Transverse colon (tissue), 4 donors: ENCODE measurements at regions of chr1 and their contacts with region 1.

Region 1: GRCh38 chr1:39672551-39672947 is 642 bp upstream of the NT5C1A start:
- DNase-seq: no peak
- H3K4me3 ChIP-seq: peak overlapping the region in 2 of 4 donors; percentile 35 to 54
- H3K27ac ChIP-seq: no peak overlapping the region
- H3K4me1 ChIP-seq: peaks cover 0 to 16% (median 14%) of the 10 kb centered on the region in 4 donors
- H3K27me3 ChIP-seq: peaks cover 52% of the 10 kb centered on the region
- CTCF ChIP-seq: peak in 2 of 5 experiments; percentile 31 to 42
- EP300 ChIP-seq: no peak
- POLR2A ChIP-seq: no peak

Region 2: DNA sequence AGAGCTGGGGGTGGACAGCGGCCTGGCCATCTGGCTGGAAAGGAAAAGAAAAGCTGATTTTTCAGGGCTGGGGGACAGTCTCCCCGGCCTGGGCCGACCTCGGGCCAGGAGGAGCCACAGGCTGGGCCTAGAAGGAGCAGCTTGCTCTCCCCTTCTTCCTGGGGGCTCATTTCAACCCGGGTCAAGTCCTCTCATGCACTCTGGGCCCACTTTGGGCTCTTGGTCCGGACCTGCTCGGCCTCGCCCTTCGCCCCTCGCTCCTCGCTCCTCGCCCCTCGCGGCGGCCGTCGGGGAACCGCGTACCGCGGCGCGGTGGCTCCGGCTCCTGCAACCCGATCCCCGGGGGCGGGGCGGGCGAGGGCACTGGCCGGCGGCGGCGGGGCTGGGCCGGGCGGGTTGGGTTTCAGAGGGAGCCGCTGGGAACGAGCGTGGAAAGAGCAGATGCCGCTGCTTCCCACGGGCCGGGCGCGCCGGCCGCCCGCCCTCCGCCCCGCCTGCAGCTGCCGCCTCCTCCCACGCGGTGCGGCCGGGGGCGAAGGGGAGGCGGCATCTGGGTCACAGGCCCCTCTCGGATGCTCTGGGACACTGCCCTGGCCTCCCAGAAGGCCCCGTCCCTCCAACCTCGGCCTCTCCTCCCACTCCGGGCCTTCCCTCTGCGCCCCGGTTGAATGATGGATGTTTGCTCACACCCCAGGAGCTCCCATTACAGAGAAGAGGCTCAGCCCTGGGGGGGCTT is 39.7 kb before region 1 on chr1:
- in situ Hi-C with region 1: no loop called
- intact Hi-C with region 1: no loop called
- DNase-seq: peak; percentile 29
- H3K4me3 ChIP-seq: peak overlapping the region in 2 of 4 donors; percentile 9 to 12
- H3K27ac ChIP-seq: peak overlapping the region in 2 of 4 donors; percentile 25 to 28
- H3K4me1 ChIP-seq: peaks cover 0 to 5% (median 2%) of the 10 kb centered on the region in 4 donors
- H3K27me3 ChIP-seq: peaks cover 46% of the 10 kb centered on the region
- CTCF ChIP-seq: no peak
- EP300 ChIP-seq: no peak
- POLR2A ChIP-seq: no peak

Region 3: GRCh38 chr1:39711104-39711965 is 38.8 kb after region 1 on chr1:
- in situ Hi-C with region 1: loop called in 1 of 4 experiments (anchors 5 kb)
- intact Hi-C with region 1: no loop called
- DNase-seq: no peak
- H3K4me3 ChIP-seq: no peak overlapping the region
- H3K27ac ChIP-seq: no peak overlapping the region
- H3K4me1 ChIP-seq: no peaks in the 10 kb centered on the region
- H3K27me3 ChIP-seq: peaks cover 34% of the 10 kb centered on the region
- CTCF ChIP-seq: no peak
- EP300 ChIP-seq: no peak
- POLR2A ChIP-seq: no peak

Region 4: GRCh38 chr1:40107290-40108262 is 435.0 kb after region 1 on chr1:
- in situ Hi-C with region 1: no loop called
- intact Hi-C with region 1: no loop called
- DNase-seq: no peak
- H3K4me3 ChIP-seq: no peak overlapping the region
- H3K27ac ChIP-seq: no peak overlapping the region
- H3K4me1 ChIP-seq: no peaks in the 10 kb centered on the region
- H3K27me3 ChIP-seq: peaks cover 9% of the 10 kb centered on the region
- CTCF ChIP-seq: no peak
- EP300 ChIP-seq: no peak
- POLR2A ChIP-seq: no peak